MCF 10A (cell line): ENCODE measurements at regions of chr1 and their contacts with region 1.

Region 1: GRCh38 chr1:46724991-46725735 is 6.2 kb upstream of the EFCAB14 start:
- DNase-seq: peak; percentile 86
- H3K4me3 Mint-ChIP-seq: no peak overlapping the region
- H3K27ac Mint-ChIP-seq: no peak overlapping the region
- H3K4me1 Mint-ChIP-seq: peaks cover 15% of the 10 kb centered on the region
- H3K27me3 Mint-ChIP-seq: peaks cover 34% of the 10 kb centered on the region
- CTCF ChIP-seq: peak; percentile 72

Region 2: GRCh38 chr1:46622344-46622743 is 102.8 kb before region 1 on chr1:
- CTCF ChIA-PET with region 1: interaction called, 8 read pairs
- POLR2A ChIA-PET with region 1: no interaction called
- intact Hi-C with region 1: loop called (anchors 1 kb)
- DNase-seq: peak; percentile 61
- H3K4me3 Mint-ChIP-seq: no peak overlapping the region
- H3K27ac Mint-ChIP-seq: no peak overlapping the region
- H3K4me1 Mint-ChIP-seq: peaks cover 3% of the 10 kb centered on the region
- H3K27me3 Mint-ChIP-seq: no peaks in the 10 kb centered on the region
- CTCF ChIP-seq: peak; percentile 17